Heart left ventricle (tissue), 16 donors: ENCODE measurements at regions of chr21 and their contacts with region 1.

Region 1: DNA sequence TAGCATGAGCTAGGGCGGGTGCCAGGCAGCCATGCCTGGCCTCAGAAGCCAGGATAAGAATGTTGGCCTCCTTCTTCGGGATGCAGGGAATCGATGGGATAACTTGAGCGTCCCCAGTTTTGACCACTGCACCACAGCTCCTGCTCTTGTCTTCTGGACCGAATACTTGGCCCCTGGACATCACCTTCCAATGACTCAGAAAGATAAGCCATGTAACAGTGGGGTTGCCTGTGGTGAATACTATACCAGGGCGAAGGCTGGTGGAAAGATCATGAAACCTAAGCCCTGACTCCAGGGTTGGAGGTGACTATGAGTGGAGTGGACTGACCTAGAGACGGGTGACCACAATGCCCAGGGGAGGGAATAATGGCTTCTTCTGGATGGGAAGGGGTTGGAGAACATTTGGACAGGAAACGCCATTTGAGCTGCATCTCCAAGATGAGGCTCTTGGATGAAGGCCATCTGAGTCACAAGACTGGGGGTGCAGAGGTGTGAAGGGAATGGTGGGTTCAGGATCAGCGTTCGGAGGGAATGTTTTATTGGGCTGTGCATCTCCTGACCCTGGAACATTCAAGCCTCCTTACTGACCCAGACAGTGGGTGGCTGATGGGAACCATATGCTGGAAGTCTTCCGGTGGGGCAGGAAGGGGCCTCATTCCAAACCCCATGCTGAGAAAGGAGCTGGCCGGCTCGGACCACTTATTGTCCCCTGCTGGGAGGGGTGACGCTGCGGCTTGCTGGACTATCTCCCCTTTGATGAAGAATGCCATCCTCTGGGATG is 18.5 kb upstream of the KCNE2 start:
- DNase-seq: peak in 4 of 5 donors; percentile 45 to 49 (median 47)
- ATAC-seq: peak in 3 of 4 donors; percentile 32 to 53 (median 46)
- H3K4me3 ChIP-seq: no peak overlapping the region
- H3K27ac ChIP-seq: peak overlapping the region in 7 of 12 donors; percentile 13 to 73 (median 60)
- H3K4me1 ChIP-seq: peaks cover 0 to 43% (median 14%) of the 10 kb centered on the region in 12 donors
- H3K27me3 ChIP-seq: no peaks in the 10 kb centered on the region
- CTCF ChIP-seq: no peak
- POLR2A ChIP-seq: no peak

Region 2: DNA sequence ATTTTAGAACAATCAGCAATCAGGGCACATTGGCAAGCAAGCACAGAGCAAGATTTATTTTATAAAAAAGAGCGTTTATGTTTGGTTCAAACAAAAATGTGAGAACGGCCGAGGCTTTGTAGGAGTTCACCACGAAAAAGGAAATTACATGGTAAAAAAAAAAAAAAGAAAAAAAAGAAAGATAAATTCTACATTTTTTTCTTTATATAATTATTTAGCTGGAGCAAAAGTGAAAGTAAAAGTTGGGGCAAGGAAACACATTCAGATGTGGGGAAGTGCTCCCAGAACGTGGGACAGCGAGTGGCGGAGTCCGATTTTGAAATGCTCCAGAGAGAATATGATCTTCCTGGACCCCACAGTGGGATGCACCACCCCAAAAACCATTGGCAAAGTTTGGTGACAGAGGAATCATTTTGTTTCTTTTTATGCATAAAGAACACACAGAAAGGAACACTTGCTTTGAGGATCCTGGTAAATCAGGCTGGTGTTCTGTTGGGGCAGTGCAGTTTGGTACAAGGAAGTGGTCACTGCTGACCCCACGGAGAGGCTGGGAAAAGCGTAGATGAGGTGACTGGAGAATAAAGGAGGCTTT is 413.4 kb before region 1 on chr21:
- intact Hi-C with region 1: loop called in 1 of 10 experiments (anchors 5 kb)
- DNase-seq: no peak
- ATAC-seq: peak in 3 of 4 donors; percentile 50 to 61 (median 58)
- H3K4me3 ChIP-seq: peak overlapping the region in 11 of 12 donors; percentile 14 to 59 (median 44)
- H3K27ac ChIP-seq: peak overlapping the region in 9 of 12 donors; percentile 0 to 88 (median 44)
- H3K4me1 ChIP-seq: peaks cover 0 to 27% (median 7%) of the 10 kb centered on the region in 12 donors
- H3K27me3 ChIP-seq: no peaks in the 10 kb centered on the region
- CTCF ChIP-seq: no peak
- POLR2A ChIP-seq: no peak

Region 3: DNA sequence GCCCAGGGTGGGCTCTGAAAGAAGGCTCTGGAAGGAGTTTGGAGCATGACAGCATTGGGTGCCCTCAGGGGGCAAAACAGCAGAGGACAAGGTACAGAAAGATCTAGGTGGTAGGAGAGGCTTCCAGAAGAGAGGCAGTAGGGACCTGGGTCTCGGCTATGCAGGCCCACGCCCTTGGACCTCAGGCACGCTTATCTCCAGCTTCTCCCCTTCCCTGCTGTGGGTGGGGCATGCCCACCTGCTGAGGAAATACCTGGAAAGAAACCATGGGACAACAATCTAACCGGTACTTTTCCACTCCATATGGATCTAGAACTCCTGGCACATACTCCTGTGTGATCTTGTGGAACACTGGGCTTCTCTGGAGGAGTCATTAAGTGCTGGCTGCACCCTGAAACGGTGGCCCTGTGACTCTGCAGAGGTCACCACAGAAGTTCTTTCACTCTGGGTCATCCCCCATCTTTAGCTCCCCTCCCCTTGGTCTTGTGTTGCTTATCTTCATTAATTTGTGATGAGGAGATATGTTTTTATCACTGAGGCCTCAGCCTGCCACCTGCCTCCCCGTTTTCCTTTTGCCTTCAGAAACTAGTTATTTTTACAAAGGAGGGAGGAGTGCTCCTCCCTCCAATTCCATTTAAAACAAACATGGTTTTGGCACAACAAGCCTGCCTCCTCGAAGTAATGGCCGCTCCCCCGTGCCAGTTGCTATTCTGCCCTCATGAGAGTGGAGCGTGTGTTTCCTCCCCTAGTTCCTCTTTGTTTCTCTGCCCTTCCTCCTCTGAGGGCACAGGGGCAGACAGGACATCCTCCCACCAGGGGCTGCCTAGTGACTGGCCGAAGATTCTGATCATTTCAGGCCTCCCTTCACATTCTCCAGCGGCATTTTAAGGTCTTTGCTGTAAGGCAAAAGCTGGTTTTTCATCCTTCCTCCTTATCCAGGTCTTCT is 351.7 kb before region 1 on chr21:
- intact Hi-C with region 1: no loop called
- DNase-seq: peak in 3 of 5 donors; percentile 31 to 42 (median 34)
- ATAC-seq: peak in 1 of 4 donors; percentile 68
- H3K4me3 ChIP-seq: no peak overlapping the region
- H3K27ac ChIP-seq: peak overlapping the region in 2 of 12 donors; percentile 19 to 42
- H3K4me1 ChIP-seq: peaks cover 0 to 10% (median 0%) of the 10 kb centered on the region in 12 donors
- H3K27me3 ChIP-seq: no peaks in the 10 kb centered on the region
- CTCF ChIP-seq: no peak
- POLR2A ChIP-seq: no peak

Region 4: GRCh38 chr21:34129039-34129891 is 216.0 kb before region 1 on chr21:
- intact Hi-C with region 1: loop called in 6 of 10 experiments (anchors 2 to 5 kb)
- DNase-seq: peak; percentile 71 to 85 (median 75)
- ATAC-seq: peak; percentile 93 to 94 (median 94)
- H3K4me3 ChIP-seq: peak overlapping the region in 6 of 12 donors; percentile 13 to 39 (median 24)
- H3K27ac ChIP-seq: peak overlapping the region; percentile 48 to 91 (median 78)
- H3K4me1 ChIP-seq: peaks cover 4 to 67% (median 52%) of the 10 kb centered on the region in 12 donors
- H3K27me3 ChIP-seq: no peaks in the 10 kb centered on the region
- CTCF ChIP-seq: peak in 11 of 12 donors; percentile 12 to 65 (median 39)
- POLR2A ChIP-seq: peak in 1 of 2 donors; percentile 22

Region 5: GRCh38 chr21:34202553-34203372 is 142.5 kb before region 1 on chr21:
- intact Hi-C with region 1: loop called in 5 of 10 experiments (anchors 2 to 5 kb)
- DNase-seq: peak in 1 of 5 donors; percentile 26
- ATAC-seq: no peak
- H3K4me3 ChIP-seq: peak overlapping the region in 4 of 12 donors; percentile 5 to 56 (median 30)
- H3K27ac ChIP-seq: peak overlapping the region in 2 of 12 donors; percentile 37 to 79
- H3K4me1 ChIP-seq: peaks cover 0 to 63% (median 14%) of the 10 kb centered on the region in 12 donors
- H3K27me3 ChIP-seq: no peaks in the 10 kb centered on the region
- CTCF ChIP-seq: no peak
- POLR2A ChIP-seq: no peak

Region 6: GRCh38 chr21:34298534-34299167 is 46.6 kb before region 1 on chr21:
- intact Hi-C with region 1: loop called in 1 of 10 experiments (anchors 5 kb)
- DNase-seq: no peak
- ATAC-seq: peak in 1 of 4 donors; percentile 17
- H3K4me3 ChIP-seq: no peak overlapping the region
- H3K27ac ChIP-seq: no peak overlapping the region
- H3K4me1 ChIP-seq: peaks cover 0 to 15% (median 0%) of the 10 kb centered on the region in 12 donors
- H3K27me3 ChIP-seq: no peaks in the 10 kb centered on the region
- CTCF ChIP-seq: no peak
- POLR2A ChIP-seq: no peak

Region 7: GRCh38 chr21:34333150-34333739 is 12.0 kb before region 1 on chr21:
- intact Hi-C with region 1: no loop called
- DNase-seq: no peak
- ATAC-seq: no peak
- H3K4me3 ChIP-seq: no peak overlapping the region
- H3K27ac ChIP-seq: no peak overlapping the region
- H3K4me1 ChIP-seq: peaks cover 0 to 21% (median 13%) of the 10 kb centered on the region in 12 donors
- H3K27me3 ChIP-seq: no peaks in the 10 kb centered on the region
- CTCF ChIP-seq: no peak
- POLR2A ChIP-seq: no peak

Region 8: DNA sequence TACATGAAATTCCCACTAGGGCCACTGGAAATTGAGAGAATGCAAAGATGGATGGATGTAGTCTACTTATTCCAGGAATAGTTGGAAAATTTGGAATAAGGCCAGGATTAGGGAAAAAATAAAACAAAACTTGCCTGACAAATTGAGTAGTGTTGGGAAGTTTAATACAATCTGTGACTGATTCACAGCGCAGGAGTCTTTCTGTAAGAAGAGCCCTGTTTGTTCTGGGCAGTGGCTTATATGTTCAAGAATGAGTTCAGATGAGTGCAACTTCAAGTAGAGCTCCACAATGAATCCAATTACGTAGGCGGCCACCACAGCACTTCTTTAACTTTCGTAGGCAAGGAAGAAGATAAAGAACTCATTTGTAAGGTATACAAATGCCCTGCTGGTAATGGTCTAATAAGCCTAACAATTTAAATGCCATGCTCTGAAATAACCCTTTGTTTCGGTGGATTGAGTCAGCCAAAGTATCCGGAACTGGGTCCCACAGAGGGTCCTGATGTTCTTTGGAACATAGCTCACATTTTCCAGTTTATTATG is 213.9 kb after region 1 on chr21:
- intact Hi-C with region 1: no loop called
- DNase-seq: no peak
- ATAC-seq: peak in 1 of 4 donors; percentile 20
- H3K4me3 ChIP-seq: no peak overlapping the region
- H3K27ac ChIP-seq: no peak overlapping the region
- H3K4me1 ChIP-seq: peaks cover 0 to 18% (median 2%) of the 10 kb centered on the region in 12 donors
- H3K27me3 ChIP-seq: no peaks in the 10 kb centered on the region
- CTCF ChIP-seq: no peak
- POLR2A ChIP-seq: no peak

Region 9: GRCh38 chr21:34623516-34623915 is 278.2 kb after region 1 on chr21:
- intact Hi-C with region 1: no loop called
- DNase-seq: no peak
- ATAC-seq: no peak
- H3K4me3 ChIP-seq: no peak overlapping the region
- H3K27ac ChIP-seq: peak overlapping the region in 1 of 12 donors; percentile 53
- H3K4me1 ChIP-seq: peaks cover 0 to 24% (median 11%) of the 10 kb centered on the region in 12 donors
- H3K27me3 ChIP-seq: no peaks in the 10 kb centered on the region
- CTCF ChIP-seq: no peak
- POLR2A ChIP-seq: no peak